Activated naive CD4-positive, alpha-beta T cell treated with anti-CD3 and anti-CD28 coated beads for 36 hours (primary cell): ENCODE measurements at regions of chr2 and their contacts with region 1.

Region 1: GRCh38 chr2:136384531-136385303 is 266.8 kb upstream of the CXCR4 start:
- DNase-seq: peak; percentile 73
- H3K4me3 Mint-ChIP-seq: no peak overlapping the region
- H3K27ac Mint-ChIP-seq: no peak overlapping the region
- H3K4me1 Mint-ChIP-seq: peaks cover 41% of the 10 kb centered on the region
- H3K27me3 Mint-ChIP-seq: no peaks in the 10 kb centered on the region

Region 2: DNA sequence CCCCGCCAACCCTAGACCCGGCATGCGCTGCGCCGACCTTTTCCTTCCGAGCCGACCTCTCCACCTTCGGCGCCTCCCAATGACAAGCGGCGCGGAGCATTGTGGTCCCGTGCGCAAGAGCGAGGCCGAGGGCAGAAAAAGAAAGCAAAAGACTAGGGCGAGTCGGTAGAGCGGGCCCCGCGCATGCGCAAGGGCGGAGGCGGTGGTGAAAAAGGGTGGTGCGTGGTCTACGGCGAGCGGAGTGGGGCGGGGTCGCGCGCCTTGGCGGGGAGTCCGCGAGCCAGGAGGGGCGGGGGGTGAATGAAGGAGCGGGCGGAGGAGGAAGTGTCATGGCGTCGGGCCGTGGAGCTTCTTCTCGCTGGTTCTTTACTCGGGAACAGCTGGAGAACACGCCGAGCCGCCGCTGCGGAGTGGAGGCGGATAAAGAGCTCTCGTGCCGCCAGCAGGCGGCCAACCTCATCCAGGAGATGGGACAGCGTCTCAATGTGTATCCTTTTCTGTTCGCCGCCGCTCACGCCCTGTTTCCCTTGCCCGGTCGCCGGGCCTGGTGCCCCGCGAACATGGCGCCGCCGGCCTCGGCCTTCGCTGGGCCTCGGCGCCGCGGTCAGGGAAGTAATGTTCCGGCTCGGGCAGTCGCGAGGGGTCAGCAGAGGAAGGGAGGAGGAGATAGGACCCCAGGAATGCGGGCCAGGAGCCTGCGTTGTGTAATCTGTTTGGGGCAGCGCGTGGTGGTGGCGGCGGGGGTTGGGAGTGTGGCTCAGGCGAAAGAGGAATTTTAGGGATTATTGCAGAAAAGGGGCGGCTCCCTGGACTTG is 1466.0 kb before region 1 on chr2 and contains the start of gene CCNT2:
- CTCF ChIA-PET with region 1: no interaction called
- intact Hi-C with region 1: loop called (anchors 1 kb)
- DNase-seq: peak; percentile 99
- H3K4me3 Mint-ChIP-seq: peak within 1 kb of the TSS; percentile 95
- H3K27ac Mint-ChIP-seq: peak within 1 kb of the TSS; percentile 98
- H3K4me1 Mint-ChIP-seq: peaks cover 24% of the 10 kb centered on the region
- H3K27me3 Mint-ChIP-seq: no peaks in the 10 kb centered on the region
- total RNA-seq, gene CCNT2: 31.9 to 33.2 TPM

Region 3: DNA sequence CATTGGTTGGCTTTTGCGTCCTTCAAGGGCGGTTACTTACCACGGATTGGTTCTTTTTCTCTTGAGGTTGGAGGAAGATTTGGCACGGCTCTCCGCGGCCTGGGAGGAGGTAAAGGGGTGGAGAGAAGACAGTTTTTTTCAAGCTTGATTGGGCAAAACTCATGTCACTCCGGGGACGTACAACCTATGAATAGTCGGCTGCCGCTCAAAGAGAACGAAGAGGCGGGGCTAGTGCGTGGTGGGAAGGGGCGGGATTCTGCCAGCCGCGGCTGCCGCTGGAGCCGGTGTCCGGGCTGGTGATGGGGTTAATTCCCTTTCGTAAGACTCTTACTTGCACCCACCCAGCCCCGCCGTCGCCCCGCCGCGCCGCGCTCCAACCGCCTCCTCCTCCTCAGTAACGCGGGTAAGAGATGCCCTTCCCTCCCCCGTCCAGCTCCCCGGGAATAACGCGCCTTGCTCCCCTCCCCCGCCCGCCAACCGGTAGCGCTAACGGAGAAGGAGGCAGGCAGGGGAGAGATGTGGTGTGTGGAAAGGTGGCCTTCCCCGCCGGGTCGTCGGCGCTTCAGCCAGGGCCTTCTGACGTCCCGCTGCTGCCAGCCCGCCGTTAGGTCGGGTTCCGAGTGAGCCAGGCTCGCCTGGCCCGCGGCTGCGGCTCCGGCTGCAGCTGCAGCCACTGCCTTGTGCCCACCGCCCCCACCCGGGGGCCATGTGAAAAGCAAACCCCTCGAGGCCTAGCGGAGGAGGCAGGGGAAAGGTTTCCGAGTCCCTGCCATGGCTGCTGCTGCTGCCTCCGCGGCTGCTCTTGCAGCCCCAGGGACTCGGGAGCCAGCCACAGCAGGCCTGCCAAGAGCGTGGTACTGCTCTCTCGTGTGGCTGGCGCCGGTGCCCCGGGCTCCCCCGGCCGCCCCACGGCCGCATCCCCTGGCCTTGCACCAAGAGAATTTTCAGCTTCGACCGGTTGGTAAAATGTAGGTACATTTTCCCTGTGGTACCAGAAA is 853.2 kb before region 1 on chr2 and contains the start of gene R3HDM1:
- CTCF ChIA-PET with region 1: no interaction called
- intact Hi-C with region 1: loop called (anchors 1 kb)
- DNase-seq: peak; percentile 98
- H3K4me3 Mint-ChIP-seq: no peak within 1 kb of the TSS
- H3K27ac Mint-ChIP-seq: peak within 1 kb of the TSS; percentile 39
- H3K4me1 Mint-ChIP-seq: peaks cover 39% of the 10 kb centered on the region
- H3K27me3 Mint-ChIP-seq: no peaks in the 10 kb centered on the region
- total RNA-seq, gene R3HDM1: 61.9 to 73.1 TPM

Region 4: GRCh38 chr2:135870571-135870970 is 514.1 kb before region 1 on chr2:
- CTCF ChIA-PET with region 1: interaction called, 6 read pairs
- intact Hi-C with region 1: loop called (anchors 1 kb)
- DNase-seq: peak; percentile 29
- H3K4me3 Mint-ChIP-seq: no peak overlapping the region
- H3K27ac Mint-ChIP-seq: no peak overlapping the region
- H3K4me1 Mint-ChIP-seq: peaks cover 53% of the 10 kb centered on the region
- H3K27me3 Mint-ChIP-seq: no peaks in the 10 kb centered on the region

Region 5: DNA sequence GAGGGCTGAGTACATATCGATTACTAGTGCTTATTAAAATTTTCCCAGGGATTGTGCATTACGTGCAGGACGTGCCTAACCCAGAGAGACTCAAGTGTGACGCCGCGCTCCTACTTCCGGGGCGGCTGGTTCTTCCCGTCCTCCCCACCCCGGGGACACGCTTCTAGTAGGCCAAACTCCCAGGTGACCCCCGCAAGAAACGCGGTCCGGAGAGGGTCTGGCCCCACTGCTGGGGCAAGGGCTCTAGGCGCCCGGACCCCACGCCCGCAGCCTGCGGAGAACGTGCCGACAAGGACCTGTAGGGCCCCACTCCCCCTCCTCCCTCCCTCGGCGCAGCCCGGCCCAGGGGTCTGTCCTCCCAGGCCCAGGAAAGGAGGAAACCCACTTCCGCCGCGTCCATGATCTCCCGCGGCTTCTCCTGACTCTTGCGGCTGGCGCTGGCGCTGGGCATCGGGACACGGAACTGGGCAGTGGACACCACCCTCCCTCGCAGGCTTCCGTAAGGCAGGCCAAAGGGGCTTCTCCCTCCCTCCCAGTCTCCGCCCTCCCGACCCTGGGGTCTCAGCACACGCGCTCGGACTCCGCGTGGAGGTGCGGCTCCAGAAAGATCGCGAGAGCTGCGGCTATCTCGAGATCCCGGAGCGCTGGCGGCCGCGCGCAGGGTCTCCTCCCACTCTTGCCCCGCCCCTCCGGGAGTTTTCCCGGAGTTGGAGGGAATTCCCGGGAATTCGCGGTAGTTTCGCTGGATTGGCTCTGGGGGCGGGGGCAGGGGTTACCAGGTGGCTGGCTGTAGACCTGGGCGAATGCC is 399.5 kb before region 1 on chr2 and contains the start of gene DARS1:
- CTCF ChIA-PET with region 1: interaction called, 8 read pairs
- intact Hi-C with region 1: loop called (anchors 1 kb)
- DNase-seq: peak; percentile 90
- H3K4me3 Mint-ChIP-seq: peak within 1 kb of the TSS; percentile 95
- H3K27ac Mint-ChIP-seq: peak within 1 kb of the TSS; percentile 97
- H3K4me1 Mint-ChIP-seq: peaks cover 39% of the 10 kb centered on the region
- H3K27me3 Mint-ChIP-seq: no peaks in the 10 kb centered on the region
- total RNA-seq, gene DARS1: 161 to 177 TPM

Region 6: GRCh38 chr2:136117909-136118818 is 266.6 kb before region 1 on chr2 and contains the start of gene CXCR4:
- CTCF ChIA-PET with region 1: interaction called, 4 read pairs
- intact Hi-C with region 1: loop called (anchors 1 kb)
- DNase-seq: peak; percentile 82
- H3K4me3 Mint-ChIP-seq: peak within 1 kb of the TSS; percentile 95
- H3K27ac Mint-ChIP-seq: peak within 1 kb of the TSS; percentile 91
- H3K4me1 Mint-ChIP-seq: peaks cover 57% of the 10 kb centered on the region
- H3K27me3 Mint-ChIP-seq: no peaks in the 10 kb centered on the region
- total RNA-seq, gene CXCR4: 70.2 to 72.6 TPM

Region 7: DNA sequence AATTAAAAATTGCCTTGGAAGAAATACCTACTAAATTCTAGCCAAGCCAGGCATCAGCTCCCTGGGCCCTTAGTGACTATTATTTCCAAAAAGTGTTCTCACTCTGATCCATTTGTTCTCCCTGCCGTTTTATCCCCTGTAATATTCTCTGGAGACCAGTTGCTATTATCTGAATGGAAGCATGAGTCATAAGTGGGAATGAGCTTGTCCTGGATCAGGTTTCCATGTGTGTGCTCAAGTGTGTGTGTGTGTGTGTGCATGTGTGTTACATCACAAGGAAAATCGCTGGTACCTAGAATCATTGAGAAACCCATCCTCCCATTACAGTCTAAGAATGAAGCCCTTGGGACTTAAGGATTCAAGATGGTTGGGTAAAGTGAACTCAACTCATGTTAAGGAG is 136.5 kb before region 1 on chr2:
- CTCF ChIA-PET with region 1: no interaction called
- intact Hi-C with region 1: no loop called
- DNase-seq: no peak
- H3K4me3 Mint-ChIP-seq: no peak overlapping the region
- H3K27ac Mint-ChIP-seq: no peak overlapping the region
- H3K4me1 Mint-ChIP-seq: peaks cover 3% of the 10 kb centered on the region
- H3K27me3 Mint-ChIP-seq: no peaks in the 10 kb centered on the region

Region 8: GRCh38 chr2:136310797-136311603 is 73.7 kb before region 1 on chr2:
- CTCF ChIA-PET with region 1: interaction called, 5 read pairs
- intact Hi-C with region 1: loop called (anchors 1 kb)
- DNase-seq: peak; percentile 60
- H3K4me3 Mint-ChIP-seq: no peak overlapping the region
- H3K27ac Mint-ChIP-seq: peak overlapping the region; percentile 82
- H3K4me1 Mint-ChIP-seq: peaks cover 18% of the 10 kb centered on the region
- H3K27me3 Mint-ChIP-seq: no peaks in the 10 kb centered on the region